Breast epithelium (tissue), 4 donors: ENCODE measurements at regions of chr13 and their contacts with region 1.

Region 1: GRCh38 chr13:75445717-75446499 is 36.1 kb downstream of the TBC1D4 start:
- DNase-seq: no peak
- H3K4me3 ChIP-seq: peak overlapping the region; percentile 11 to 37 (median 23)
- H3K27ac ChIP-seq: peak overlapping the region; percentile 42 to 57
- H3K4me1 ChIP-seq: peaks cover 0 to 3% of the 10 kb centered on the region in 2 donors
- H3K27me3 ChIP-seq: no peaks in the 10 kb centered on the region
- CTCF ChIP-seq: no peak
- POLR2A ChIP-seq: no peak

Region 2: GRCh38 chr13:75715601-75716523 is 270.0 kb after region 1 on chr13:
- intact Hi-C with region 1: no loop called
- DNase-seq: no peak
- H3K4me3 ChIP-seq: no peak overlapping the region
- H3K27ac ChIP-seq: no peak overlapping the region
- H3K4me1 ChIP-seq: no peaks in the 10 kb centered on the region
- H3K27me3 ChIP-seq: no peaks in the 10 kb centered on the region
- CTCF ChIP-seq: no peak
- POLR2A ChIP-seq: no peak

Region 3: DNA sequence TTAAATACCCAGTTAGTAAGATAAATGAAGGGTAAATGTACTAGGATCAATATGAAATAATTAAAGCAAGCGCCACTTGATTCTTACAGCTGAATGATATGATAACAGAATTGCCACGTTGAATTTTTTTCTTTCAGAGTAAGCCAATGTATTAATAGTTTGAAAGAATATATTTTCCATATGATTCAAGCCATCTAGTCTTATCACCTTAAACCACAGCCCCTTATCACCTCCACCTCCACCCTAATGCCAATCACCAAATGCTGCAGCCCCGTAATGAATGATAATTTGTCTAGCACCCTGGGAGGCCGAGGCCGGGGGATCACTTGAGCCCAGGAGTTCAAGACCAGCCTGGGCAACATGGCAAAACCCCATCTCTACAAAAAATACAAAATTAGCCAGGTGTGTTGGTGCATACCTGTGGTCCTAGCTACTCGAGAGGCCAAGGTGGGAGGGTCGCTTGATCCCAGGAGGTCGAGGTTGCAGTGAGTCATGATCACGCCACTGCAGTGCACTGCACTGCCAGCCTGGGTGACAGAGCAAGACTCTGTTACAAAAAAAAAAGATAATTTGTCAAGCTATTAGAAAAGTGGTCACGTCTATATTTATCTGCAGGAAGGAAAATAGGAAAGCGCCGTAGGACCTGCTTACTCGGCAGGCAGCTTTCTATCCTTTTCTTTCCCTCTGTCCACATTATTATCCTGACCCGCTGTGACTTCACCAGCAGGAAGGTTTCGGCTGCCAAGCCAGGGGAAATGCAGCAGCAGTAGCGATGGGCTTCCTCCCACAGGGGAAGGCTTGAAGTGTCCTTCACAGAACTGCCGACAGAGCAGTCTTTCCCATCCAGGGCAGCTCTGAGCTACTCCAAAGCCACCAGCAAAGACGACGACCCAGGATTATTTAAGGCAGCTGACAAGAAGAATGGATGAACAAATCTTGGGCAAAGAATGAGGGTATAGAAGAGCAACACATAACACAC is 1526.2 kb after region 1 on chr13:
- intact Hi-C with region 1: loop called (anchors 5 kb)
- DNase-seq: no peak
- H3K4me3 ChIP-seq: no peak overlapping the region
- H3K27ac ChIP-seq: no peak overlapping the region
- H3K4me1 ChIP-seq: no peaks in the 10 kb centered on the region
- H3K27me3 ChIP-seq: no peaks in the 10 kb centered on the region
- CTCF ChIP-seq: no peak
- POLR2A ChIP-seq: no peak